Activated CD8-positive, alpha-beta T cell treated with anti-CD3 and anti-CD28 coated beads, Interleukin-2, amount 10 ng/mL, durations not matched to agents 7 days and 5 days (primary cell): ENCODE measurements at regions of chr17 and their contacts with region 1.

Region 1: GRCh38 chr17:64648234-64648633 is 13.9 kb downstream of the SMURF2 start:
- DNase-seq: no peak
- ATAC-seq: no peak
- H3K4me3 Mint-ChIP-seq: no peak overlapping the region
- H3K27ac Mint-ChIP-seq: no peak overlapping the region
- H3K4me1 Mint-ChIP-seq: peaks cover 43% of the 10 kb centered on the region
- H3K27me3 Mint-ChIP-seq: no peaks in the 10 kb centered on the region

Region 2: GRCh38 chr17:64632606-64633005 is 15.6 kb before region 1 on chr17:
- CTCF ChIA-PET with region 1: interaction called, 17 read pairs
- POLR2A ChIA-PET with region 1: interaction called, 4 read pairs
- DNase-seq: no peak
- ATAC-seq: no peak
- H3K4me3 Mint-ChIP-seq: no peak overlapping the region
- H3K27ac Mint-ChIP-seq: no peak overlapping the region
- H3K4me1 Mint-ChIP-seq: peaks cover 43% of the 10 kb centered on the region
- H3K27me3 Mint-ChIP-seq: no peaks in the 10 kb centered on the region

Region 3: DNA sequence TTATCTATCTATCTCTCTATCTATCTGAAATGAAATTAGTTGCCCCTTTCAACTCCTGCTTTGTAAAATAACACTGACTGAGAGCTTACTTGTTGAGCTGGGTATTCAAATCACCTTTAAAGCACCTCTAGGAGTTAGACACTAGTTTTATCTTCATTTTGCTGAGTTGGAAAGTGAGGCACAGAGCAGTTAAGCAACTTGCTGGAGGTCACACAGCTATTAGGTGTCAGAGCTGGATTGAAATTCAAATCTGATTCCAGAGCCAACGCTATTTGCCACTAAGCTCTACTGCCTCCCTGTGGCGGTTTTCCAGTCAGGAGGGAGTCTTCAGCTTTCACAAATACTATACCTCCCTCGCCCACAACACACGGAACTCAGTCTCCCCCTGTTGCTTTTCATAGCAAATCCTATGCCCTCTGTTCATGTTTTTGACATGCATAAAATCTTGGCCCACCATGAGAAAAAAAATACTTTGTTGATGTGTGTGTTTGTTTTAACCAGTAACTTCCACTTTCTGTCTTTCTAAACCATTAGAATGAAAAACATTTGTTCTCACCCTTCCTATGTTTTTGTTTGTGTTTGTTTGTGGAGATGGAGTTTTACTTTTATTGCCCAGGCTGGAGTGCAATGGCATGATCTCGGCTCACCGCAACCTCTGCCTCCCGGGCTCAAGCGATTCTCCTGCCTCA is 88.7 kb after region 1 on chr17:
- CTCF ChIA-PET with region 1: interaction called, 17 read pairs
- POLR2A ChIA-PET with region 1: no interaction called
- DNase-seq: peak; percentile 77
- ATAC-seq: peak; percentile 84
- H3K4me3 Mint-ChIP-seq: no peak overlapping the region
- H3K27ac Mint-ChIP-seq: no peak overlapping the region
- H3K4me1 Mint-ChIP-seq: peaks cover 32% of the 10 kb centered on the region
- H3K27me3 Mint-ChIP-seq: no peaks in the 10 kb centered on the region